SK-N-SH (cell line): ENCODE measurements at regions of chr1 and their contacts with region 1.

Region 1: DNA sequence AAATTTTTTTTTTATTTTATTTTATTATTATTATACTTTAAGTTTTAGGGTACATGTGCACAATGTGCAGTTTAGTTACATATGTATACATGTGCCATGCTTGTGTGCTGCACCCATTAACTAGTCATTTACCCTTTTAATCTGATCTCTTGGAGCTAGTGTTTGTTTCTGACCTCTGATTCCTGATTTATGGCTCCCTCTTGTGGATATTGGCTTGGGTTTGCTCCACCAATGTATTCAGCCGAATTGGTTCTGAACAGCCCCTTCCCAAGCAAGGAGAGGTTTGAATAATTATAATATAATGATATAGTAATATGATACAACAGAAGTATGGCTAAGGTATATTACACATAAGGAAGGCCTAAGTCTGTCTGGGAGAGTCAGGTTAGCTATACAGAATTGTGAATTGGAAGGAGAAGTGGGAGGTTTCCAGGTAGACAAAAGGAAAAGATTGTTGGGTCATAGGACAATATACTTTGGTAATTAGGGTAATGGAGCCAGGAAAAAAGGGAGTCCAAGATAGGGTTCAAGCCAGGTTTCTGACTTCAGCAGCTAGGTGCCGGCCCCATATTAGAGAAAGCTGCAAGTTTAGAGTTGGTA is 53.1 kb upstream of the HMCN1 start:
- DNase-seq: peak; percentile 17
- H3K4me3 ChIP-seq: no peak overlapping the region
- H3K27ac ChIP-seq: no peak overlapping the region
- H3K4me1 ChIP-seq: peaks cover 0 to 12% of the 10 kb centered on the region in 2 experiments; a peak in 1 of 4 replicates
- H3K27me3 ChIP-seq: no peaks in the 10 kb centered on the region
- CTCF ChIP-seq: peak; percentile 68
- EP300 ChIP-seq: no peak
- RAD21 ChIP-seq: peak; percentile 71

Region 2: GRCh38 chr1:185238447-185238846 is 442.7 kb before region 1 on chr1:
- CTCF ChIA-PET with region 1: interaction called, 10 read pairs
- POLR2A ChIA-PET with region 1: no interaction called
- DNase-seq: no peak
- H3K4me3 ChIP-seq: no peak overlapping the region
- H3K27ac ChIP-seq: no peak overlapping the region
- H3K4me1 ChIP-seq: no peaks in the 10 kb centered on the region
- H3K27me3 ChIP-seq: no peaks in the 10 kb centered on the region
- CTCF ChIP-seq: peak; percentile 48
- EP300 ChIP-seq: no peak
- RAD21 ChIP-seq: peak; percentile 55

Region 3: GRCh38 chr1:185670187-185670627 is 10.9 kb before region 1 on chr1:
- CTCF ChIA-PET with region 1: interaction called, 20 read pairs
- POLR2A ChIA-PET with region 1: no interaction called
- DNase-seq: no peak
- H3K4me3 ChIP-seq: no peak overlapping the region
- H3K27ac ChIP-seq: no peak overlapping the region
- H3K4me1 ChIP-seq: peaks cover 0 to 4% of the 10 kb centered on the region in 2 experiments; a peak in 2 of 4 replicates
- H3K27me3 ChIP-seq: no peaks in the 10 kb centered on the region
- CTCF ChIP-seq: peak; percentile 71
- EP300 ChIP-seq: no peak
- RAD21 ChIP-seq: peak; percentile 66